ENCODE measurements at regions of chr3 and their contacts with region 1.

Region 1: GRCh38 chr3:99753268-99753975 is 64.2 kb upstream of the CMSS1 start:
- DNase-seq: peak; percentile 28
- ATAC-seq: peak; percentile 49
- H3K4me3 ChIP-seq: no peak overlapping the region
- H3K4me3 Mint-ChIP-seq: no peak overlapping the region
- H3K27ac ChIP-seq: no peak overlapping the region
- H3K27ac Mint-ChIP-seq: no peak overlapping the region
- H3K4me1 ChIP-seq: no peaks in the 10 kb centered on the region
- H3K4me1 Mint-ChIP-seq: no peaks in the 10 kb centered on the region
- H3K27me3 ChIP-seq: peaks cover 0 to 2% (median 1%) of the 10 kb centered on the region in 4 experiments
- H3K27me3 Mint-ChIP-seq: peaks cover 15% of the 10 kb centered on the region
- CTCF ChIP-seq: peak; percentile 66

Region 2: DNA sequence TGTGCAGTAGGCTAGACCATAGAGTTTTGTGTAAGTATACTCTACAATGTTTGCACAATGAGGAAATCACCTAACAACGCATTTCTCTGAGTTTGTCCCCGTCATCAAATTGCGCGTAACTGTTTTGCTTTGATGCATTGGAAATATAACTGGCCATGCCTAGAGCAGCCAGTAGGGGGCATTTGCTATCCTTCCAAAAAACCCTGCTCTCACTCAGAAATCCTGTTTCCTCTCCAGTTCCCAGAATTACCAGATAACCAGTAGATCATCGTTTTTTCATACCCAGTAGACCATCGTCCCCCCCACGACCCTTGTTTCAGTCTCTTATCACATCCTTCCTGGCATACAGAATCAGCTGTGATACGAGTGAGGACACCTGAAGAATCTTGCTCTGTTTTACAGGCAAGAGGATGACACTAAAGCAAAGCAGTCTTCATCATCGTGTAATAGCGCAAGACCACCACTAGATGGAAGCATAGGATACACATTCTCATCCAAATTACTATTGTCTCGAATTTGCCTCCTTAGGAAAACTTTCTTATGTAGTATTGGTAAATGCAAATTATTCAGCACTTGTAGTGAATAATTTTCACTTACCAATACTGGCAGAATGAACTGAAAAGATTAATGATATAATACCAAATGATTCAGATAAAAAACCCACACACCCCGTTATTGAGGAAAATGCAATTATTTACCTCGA is 1713.9 kb before region 1 on chr3:
- CTCF ChIA-PET with region 1: no interaction called
- POLR2A ChIA-PET with region 1: no interaction called
- intact Hi-C with region 1: loop called (anchors 5 kb)
- DNase-seq: peak; percentile 87
- ATAC-seq: peak; percentile 97
- H3K4me3 ChIP-seq: peak overlapping the region in 4 of 5 experiments; percentile 23 to 58 (median 42)
- H3K4me3 Mint-ChIP-seq: peak overlapping the region; percentile 85
- H3K27ac ChIP-seq: no peak overlapping the region
- H3K27ac Mint-ChIP-seq: peak overlapping the region; percentile 59
- H3K4me1 ChIP-seq: peaks cover 0 to 5% of the 10 kb centered on the region in 2 donors
- H3K4me1 Mint-ChIP-seq: peaks cover 5% of the 10 kb centered on the region
- H3K27me3 ChIP-seq: peaks cover 0 to 4% (median 0%) of the 10 kb centered on the region in 4 experiments
- H3K27me3 Mint-ChIP-seq: peaks cover 27% of the 10 kb centered on the region
- CTCF ChIP-seq: peak; percentile 98

Region 3: GRCh38 chr3:99720985-99721632 is 32.3 kb before region 1 on chr3:
- CTCF ChIA-PET with region 1: no interaction called
- POLR2A ChIA-PET with region 1: no interaction called
- intact Hi-C with region 1: no loop called
- DNase-seq: no peak
- ATAC-seq: no peak
- H3K4me3 ChIP-seq: no peak overlapping the region
- H3K4me3 Mint-ChIP-seq: no peak overlapping the region
- H3K27ac ChIP-seq: no peak overlapping the region
- H3K27ac Mint-ChIP-seq: no peak overlapping the region
- H3K4me1 ChIP-seq: no peaks in the 10 kb centered on the region
- H3K4me1 Mint-ChIP-seq: no peaks in the 10 kb centered on the region
- H3K27me3 ChIP-seq: no peaks in the 10 kb centered on the region
- H3K27me3 Mint-ChIP-seq: peaks cover 8% of the 10 kb centered on the region
- CTCF ChIP-seq: no peak

Measured in B cell (primary cell).